PC-9 (cell line): ENCODE measurements at regions of chr2 and their contacts with region 1.

Region 1: DNA sequence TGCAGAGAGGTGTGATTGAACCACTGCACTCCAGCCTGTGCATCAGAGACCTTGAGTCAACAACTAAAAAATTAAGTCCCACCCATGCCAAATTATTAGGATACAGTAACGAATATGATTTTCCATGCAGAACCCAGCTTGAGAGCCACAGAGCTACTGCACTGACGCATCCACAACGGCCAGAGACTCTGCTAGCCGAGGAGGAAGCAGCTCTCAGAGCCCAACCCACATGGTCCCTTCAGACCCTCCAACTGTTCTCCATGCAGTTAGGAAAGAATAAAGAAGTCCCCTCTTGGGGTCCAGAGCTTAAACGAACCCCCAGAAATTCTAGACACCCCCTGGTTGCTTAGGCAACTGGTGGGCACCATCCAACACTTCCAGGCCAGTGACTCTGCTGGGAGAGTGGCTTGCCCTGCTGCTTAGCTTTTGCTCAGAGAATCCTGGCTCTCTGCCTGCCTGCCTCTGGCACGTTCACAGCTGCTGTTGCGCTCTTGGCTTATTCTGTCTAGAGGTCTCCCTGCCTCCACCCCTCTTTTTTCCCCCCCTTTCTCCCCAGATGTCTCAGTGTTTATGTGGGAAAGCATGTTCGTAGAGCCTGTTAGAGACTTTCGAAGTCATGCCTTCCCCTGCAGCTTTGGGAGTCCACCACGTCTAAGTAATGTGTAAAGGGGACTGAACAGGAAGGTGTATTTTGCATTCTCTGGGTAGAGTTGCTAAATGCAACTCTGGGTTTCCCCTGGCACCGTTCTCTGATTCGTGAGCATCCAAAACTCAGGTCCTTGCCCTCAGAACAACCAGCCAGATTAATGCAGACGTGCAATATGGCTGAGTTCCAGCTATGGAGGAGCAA is 26.0 kb upstream of the SP3 start:
- DNase-seq: no peak
- H3K4me3 ChIP-seq: no peak overlapping the region
- H3K27ac ChIP-seq: no peak overlapping the region
- H3K4me1 ChIP-seq: peaks cover 12% of the 10 kb centered on the region
- H3K27me3 ChIP-seq: peaks cover 13% of the 10 kb centered on the region; the same call in 1 of the 2 replicates
- CTCF ChIP-seq: no peak

Region 2: GRCh38 chr2:173972603-173973002 is 18.6 kb before region 1 on chr2:
- CTCF ChIA-PET with region 1: interaction called, 10 read pairs
- POLR2A ChIA-PET with region 1: no interaction called
- intact Hi-C with region 1: loop called (anchors 2 kb)
- DNase-seq: peak; percentile 95 to 96
- H3K4me3 ChIP-seq: no peak overlapping the region
- H3K27ac ChIP-seq: peak overlapping the region; percentile 21
- H3K4me1 ChIP-seq: peaks cover 32% of the 10 kb centered on the region
- H3K27me3 ChIP-seq: no peaks in the 10 kb centered on the region
- CTCF ChIP-seq: no peak

Region 3: GRCh38 chr2:174324530-174324929 is 333.3 kb after region 1 on chr2:
- CTCF ChIA-PET with region 1: no interaction called
- POLR2A ChIA-PET with region 1: interaction called, 13 read pairs
- intact Hi-C with region 1: no loop called
- DNase-seq: no peak
- H3K4me3 ChIP-seq: no peak overlapping the region
- H3K27ac ChIP-seq: no peak overlapping the region
- H3K4me1 ChIP-seq: no peaks in the 10 kb centered on the region
- H3K27me3 ChIP-seq: peaks cover 26% of the 10 kb centered on the region
- CTCF ChIP-seq: no peak